Calu3 (cell line): ENCODE measurements at regions of chr16 and their contacts with region 1.

Region 1: GRCh38 chr16:13070268-13070667 is 168.9 kb downstream of the SHISA9 start:
- DNase-seq: no peak
- H3K4me3 Mint-ChIP-seq: no peak overlapping the region
- H3K27ac Mint-ChIP-seq: no peak overlapping the region
- H3K4me1 Mint-ChIP-seq: no peaks in the 10 kb centered on the region
- H3K27me3 Mint-ChIP-seq: no peaks in the 10 kb centered on the region
- CTCF ChIP-seq: no peak

Region 2: DNA sequence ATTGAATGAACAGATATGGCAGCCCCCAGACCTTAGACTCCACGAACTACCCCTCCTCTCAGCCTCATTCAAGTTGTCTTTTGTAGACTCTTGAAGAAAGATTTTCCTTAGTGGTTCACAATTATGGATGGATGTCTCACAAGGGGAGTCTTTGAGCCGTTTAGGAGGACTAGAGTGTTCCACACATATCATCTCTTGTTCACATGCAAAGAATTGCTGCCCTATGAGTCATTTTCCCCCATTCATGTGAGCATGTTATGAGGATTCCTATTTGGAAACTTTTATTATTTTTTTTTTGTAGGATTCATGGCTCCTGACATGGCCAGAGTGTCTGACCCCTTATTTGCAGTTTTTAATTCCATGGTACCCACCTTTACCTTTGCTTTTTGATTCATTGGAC is 68.3 kb after region 1 on chr16:
- CTCF ChIA-PET with region 1: no interaction called
- intact Hi-C with region 1: no loop called
- DNase-seq: no peak
- H3K4me3 Mint-ChIP-seq: no peak overlapping the region
- H3K27ac Mint-ChIP-seq: no peak overlapping the region
- H3K4me1 Mint-ChIP-seq: no peaks in the 10 kb centered on the region
- H3K27me3 Mint-ChIP-seq: no peaks in the 10 kb centered on the region
- CTCF ChIP-seq: no peak

Region 3: GRCh38 chr16:13206606-13207005 is 136.3 kb after region 1 on chr16:
- CTCF ChIA-PET with region 1: interaction called, 10 read pairs
- intact Hi-C with region 1: no loop called
- DNase-seq: no peak
- H3K4me3 Mint-ChIP-seq: no peak overlapping the region
- H3K27ac Mint-ChIP-seq: no peak overlapping the region
- H3K4me1 Mint-ChIP-seq: no peaks in the 10 kb centered on the region
- H3K27me3 Mint-ChIP-seq: no peaks in the 10 kb centered on the region
- CTCF ChIP-seq: no peak